Ascending aorta (tissue), 2 donors: ENCODE measurements at regions of chr2 and their contacts with region 1.

Region 1: GRCh38 chr2:74458132-74458925 is at the start of gene WBP1:
- DNase-seq: peak; percentile 100
- H3K4me3 ChIP-seq: peak within 1 kb of the TSS; percentile 72 to 78
- H3K27ac ChIP-seq: peak within 1 kb of the TSS; percentile 91 to 94
- H3K4me1 ChIP-seq: peaks cover 7 to 31% of the 10 kb centered on the region in 2 donors
- H3K27me3 ChIP-seq: no peaks in the 10 kb centered on the region
- CTCF ChIP-seq: no peak
- total RNA-seq, gene WBP1: 18.1 TPM

Region 2: DNA sequence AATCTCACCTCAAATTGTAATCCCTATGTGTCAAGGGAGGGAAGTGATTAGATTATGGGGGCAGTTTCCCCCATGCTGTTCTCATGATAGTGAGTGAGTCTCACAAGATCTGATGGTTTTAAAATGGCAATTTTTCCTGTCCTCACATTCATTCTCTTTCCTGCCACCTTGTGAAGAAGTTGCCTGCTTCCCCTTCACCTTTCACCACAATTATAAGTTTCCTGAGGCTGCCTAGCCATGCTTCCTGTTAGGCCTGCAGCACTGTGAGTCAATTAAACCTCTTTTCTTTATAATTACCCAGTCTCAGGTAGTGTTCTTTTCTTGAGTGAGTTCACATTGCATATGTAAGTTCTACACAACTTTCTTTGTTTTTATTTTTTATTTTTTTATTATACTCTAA is 1903.9 kb before region 1 on chr2:
- intact Hi-C with region 1: loop called (anchors 10 kb)
- DNase-seq: no peak
- H3K4me3 ChIP-seq: no peak overlapping the region
- H3K27ac ChIP-seq: no peak overlapping the region
- H3K4me1 ChIP-seq: no peaks in the 10 kb centered on the region
- H3K27me3 ChIP-seq: no peaks in the 10 kb centered on the region
- CTCF ChIP-seq: no peak

Region 3: DNA sequence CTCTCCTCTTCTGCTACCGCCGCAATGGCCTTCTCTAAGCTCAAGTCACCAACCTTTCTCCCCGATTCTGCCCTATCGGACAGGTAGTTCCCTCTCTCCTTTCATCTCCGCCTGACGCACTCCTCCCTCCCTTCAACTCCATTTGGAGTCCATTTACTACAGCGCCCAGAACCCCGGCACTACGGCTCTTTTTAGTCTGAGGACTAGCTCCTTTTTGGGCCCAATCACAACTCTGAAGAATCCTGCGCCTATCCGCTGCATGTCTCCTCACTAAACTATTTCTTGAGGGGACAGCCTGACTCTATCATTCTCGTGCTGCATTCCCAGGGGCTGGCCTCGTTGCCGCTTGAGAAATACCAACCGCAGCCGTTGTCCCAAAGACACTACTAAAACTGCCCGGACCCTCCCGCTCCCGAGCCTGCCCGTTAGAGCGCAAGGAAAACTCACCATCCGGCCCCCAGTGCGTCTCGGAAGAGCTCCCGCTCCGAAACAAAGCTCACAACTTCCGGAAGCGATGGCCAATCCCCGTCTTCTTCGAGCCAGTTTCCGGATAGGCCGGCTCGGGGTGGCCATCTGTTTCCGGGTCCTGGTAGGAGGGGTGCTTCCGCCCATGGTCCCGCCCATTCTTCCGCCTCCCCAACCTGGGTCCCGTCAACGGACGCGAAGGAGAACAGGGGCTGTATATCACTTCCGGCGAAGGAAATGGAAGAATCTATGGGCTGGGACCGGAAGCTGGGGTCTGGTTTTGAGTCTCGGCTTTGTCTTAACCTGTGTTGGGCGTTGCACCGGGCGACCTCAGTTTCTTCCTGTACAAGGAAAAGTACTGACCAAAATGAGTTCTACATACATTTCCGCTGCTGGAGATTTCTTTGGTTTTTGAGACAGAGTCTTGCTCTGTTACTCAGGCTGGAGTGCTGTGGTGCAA is 721.2 kb before region 1 on chr2 and contains the start of gene TPRKB:
- intact Hi-C with region 1: loop called (anchors 1 kb)
- DNase-seq: peak; percentile 84 to 98
- H3K4me3 ChIP-seq: peak within 1 kb of the TSS; percentile 73 to 79
- H3K27ac ChIP-seq: peak within 1 kb of the TSS; percentile 64 to 73
- H3K4me1 ChIP-seq: peaks cover 0 to 16% of the 10 kb centered on the region in 2 donors
- H3K27me3 ChIP-seq: no peaks in the 10 kb centered on the region
- CTCF ChIP-seq: no peak
- total RNA-seq, gene TPRKB: 11.1 TPM

Region 4: DNA sequence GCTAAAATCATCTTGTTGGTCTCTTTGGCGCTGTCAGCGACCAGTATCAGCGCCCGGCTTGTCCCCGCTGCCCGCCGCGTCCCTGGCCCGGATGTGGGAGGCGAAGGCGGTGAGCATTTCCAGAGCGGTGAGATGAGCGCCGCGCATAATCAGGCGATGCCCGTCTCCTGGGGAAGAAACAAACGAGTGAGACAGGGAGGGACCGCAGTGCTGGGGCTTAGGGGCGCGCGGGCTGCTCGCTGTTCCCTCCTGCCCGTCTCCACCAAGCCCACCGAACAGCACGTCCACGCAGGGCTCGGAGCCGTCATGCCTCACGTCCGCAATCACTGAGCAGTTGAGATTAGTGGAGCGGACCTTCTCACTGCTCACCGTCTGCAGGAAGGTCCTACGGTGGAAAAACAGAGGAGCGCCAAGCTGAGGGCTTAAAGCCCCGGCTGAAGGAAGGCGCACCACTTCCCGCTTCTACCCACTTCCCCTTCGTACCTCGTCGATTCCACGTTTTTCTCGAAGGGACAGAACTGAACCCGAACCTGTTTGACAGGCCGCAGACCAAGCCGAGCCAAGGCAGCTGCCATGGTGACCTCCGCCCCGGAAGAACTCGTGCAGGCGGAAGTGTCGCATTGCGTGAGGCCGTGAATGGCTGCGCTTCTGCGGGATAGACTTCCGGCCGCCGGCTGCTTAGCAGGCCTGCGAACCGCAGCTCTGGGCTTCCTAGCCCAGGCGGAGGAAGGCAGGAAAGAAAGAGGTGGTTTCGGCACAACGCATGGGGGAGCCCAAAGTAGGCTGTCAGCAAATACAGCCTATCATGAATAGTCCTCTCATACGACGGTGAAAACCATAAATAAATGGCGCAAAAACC is 14.0 kb after region 1 on chr2 and contains the start of gene MRPL53:
- intact Hi-C with region 1: loop called (anchors 2 kb)
- DNase-seq: peak; percentile 70 to 96
- H3K4me3 ChIP-seq: peak within 1 kb of the TSS; percentile 63 to 81
- H3K27ac ChIP-seq: peak within 1 kb of the TSS; percentile 88 to 95
- H3K4me1 ChIP-seq: peaks cover 10 to 14% of the 10 kb centered on the region in 2 donors
- H3K27me3 ChIP-seq: no peaks in the 10 kb centered on the region
- CTCF ChIP-seq: no peak
- total RNA-seq, gene MRPL53: 37.7 TPM

Region 5: GRCh38 chr2:74507145-74507925 is 49.0 kb after region 1 on chr2 and contains the start of gene PCGF1:
- intact Hi-C with region 1: loop called (anchors 1 kb)
- DNase-seq: peak; percentile 97 to 99
- H3K4me3 ChIP-seq: peak within 1 kb of the TSS; percentile 76 to 78
- H3K27ac ChIP-seq: peak within 1 kb of the TSS; percentile 99
- H3K4me1 ChIP-seq: peaks cover 3 to 24% of the 10 kb centered on the region in 2 donors
- H3K27me3 ChIP-seq: no peaks in the 10 kb centered on the region
- CTCF ChIP-seq: peak in 2 of 3 experiments; percentile 19 to 27
- total RNA-seq, gene PCGF1: not detected

Region 6: GRCh38 chr2:74653985-74654882 is 195.9 kb after region 1 on chr2 and contains the start of gene SEMA4F:
- intact Hi-C with region 1: loop called (anchors 1 kb)
- DNase-seq: peak; percentile 86 to 98
- H3K4me3 ChIP-seq: peak within 1 kb of the TSS; percentile 81 to 95
- H3K27ac ChIP-seq: peak within 1 kb of the TSS; percentile 66 to 69
- H3K4me1 ChIP-seq: no peaks in the 10 kb centered on the region
- H3K27me3 ChIP-seq: no peaks in the 10 kb centered on the region
- CTCF ChIP-seq: no peak
- total RNA-seq, gene SEMA4F: 0.32 TPM